ENCODE measurements at regions of chr1 and their contacts with region 1.

Region 1: GRCh38 chr1:205255941-205256780 is 28.4 kb downstream of the TMCC2 start:
- DNase-seq: peak; percentile 73 to 91 (median 83)
- ATAC-seq: peak; percentile 99
- H3K4me3 ChIP-seq: no peak overlapping the region
- H3K4me3 Mint-ChIP-seq: no peak overlapping the region
- H3K27ac ChIP-seq: no peak overlapping the region
- H3K27ac Mint-ChIP-seq: no peak overlapping the region
- H3K4me1 ChIP-seq: no peaks in the 10 kb centered on the region
- H3K4me1 Mint-ChIP-seq: no peaks in the 10 kb centered on the region
- H3K27me3 ChIP-seq: no peaks in the 10 kb centered on the region
- H3K27me3 Mint-ChIP-seq: no peaks in the 10 kb centered on the region
- CTCF ChIP-seq: peak; percentile 95

Region 2: GRCh38 chr1:204975570-204976235 is 280.5 kb before region 1 on chr1:
- CTCF ChIA-PET with region 1: interaction called, 66 read pairs
- POLR2A ChIA-PET with region 1: no interaction called
- intact Hi-C with region 1: loop called (anchors 1 kb)
- DNase-seq: peak; percentile 16 to 63 (median 49)
- ATAC-seq: peak; percentile 74
- H3K4me3 ChIP-seq: no peak overlapping the region
- H3K4me3 Mint-ChIP-seq: no peak overlapping the region
- H3K27ac ChIP-seq: no peak overlapping the region
- H3K27ac Mint-ChIP-seq: no peak overlapping the region
- H3K4me1 ChIP-seq: no peaks in the 10 kb centered on the region
- H3K4me1 Mint-ChIP-seq: no peaks in the 10 kb centered on the region
- H3K27me3 ChIP-seq: no peaks in the 10 kb centered on the region
- H3K27me3 Mint-ChIP-seq: peaks cover 16% of the 10 kb centered on the region
- CTCF ChIP-seq: peak; percentile 75

Region 3: GRCh38 chr1:205121660-205122488 is 134.3 kb before region 1 on chr1 and contains the start of gene RBBP5:
- CTCF ChIA-PET with region 1: interaction called, 15 read pairs
- POLR2A ChIA-PET with region 1: no interaction called
- intact Hi-C with region 1: loop called (anchors 1 to 2 kb)
- DNase-seq: peak; percentile 92 to 98 (median 95)
- ATAC-seq: peak; percentile 93
- H3K4me3 ChIP-seq: peak within 1 kb of the TSS; percentile 91 to 95
- H3K4me3 Mint-ChIP-seq: peak within 1 kb of the TSS; percentile 96
- H3K27ac ChIP-seq: peak within 1 kb of the TSS; percentile 88 to 97
- H3K27ac Mint-ChIP-seq: peak within 1 kb of the TSS; percentile 100
- H3K4me1 ChIP-seq: peaks cover 26% of the 10 kb centered on the region
- H3K4me1 Mint-ChIP-seq: peaks cover 46% of the 10 kb centered on the region
- H3K27me3 ChIP-seq: no peaks in the 10 kb centered on the region
- H3K27me3 Mint-ChIP-seq: no peaks in the 10 kb centered on the region
- CTCF ChIP-seq: peak; percentile 59
- total RNA-seq, gene RBBP5: 23.9 to 25.7 TPM

Region 4: DNA sequence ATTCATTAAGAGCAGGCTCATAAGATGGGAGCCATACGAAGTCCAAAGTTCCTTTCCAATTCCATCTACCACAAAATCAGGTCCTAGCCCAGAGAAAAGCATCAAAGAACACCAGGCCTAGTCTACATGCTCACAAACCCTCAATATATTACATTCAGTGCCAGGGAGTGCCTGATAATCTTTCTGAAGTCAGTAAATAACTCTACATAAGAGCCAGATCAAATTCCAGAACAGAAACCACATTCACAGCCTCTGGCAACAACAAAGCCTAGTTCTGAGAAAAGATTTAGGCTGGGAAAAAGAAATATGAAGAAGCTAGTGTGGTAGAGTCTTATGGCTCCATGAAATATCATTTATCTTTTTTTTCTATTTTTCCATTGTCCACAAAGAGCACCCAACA is 93.9 kb before region 1 on chr1:
- CTCF ChIA-PET with region 1: interaction called, 10 read pairs
- POLR2A ChIA-PET with region 1: no interaction called
- intact Hi-C with region 1: no loop called
- DNase-seq: no peak
- ATAC-seq: no peak
- H3K4me3 ChIP-seq: no peak overlapping the region
- H3K4me3 Mint-ChIP-seq: no peak overlapping the region
- H3K27ac ChIP-seq: no peak overlapping the region
- H3K27ac Mint-ChIP-seq: no peak overlapping the region
- H3K4me1 ChIP-seq: no peaks in the 10 kb centered on the region
- H3K4me1 Mint-ChIP-seq: peaks cover 2% of the 10 kb centered on the region
- H3K27me3 ChIP-seq: no peaks in the 10 kb centered on the region
- H3K27me3 Mint-ChIP-seq: no peaks in the 10 kb centered on the region
- CTCF ChIP-seq: no peak

Region 5: DNA sequence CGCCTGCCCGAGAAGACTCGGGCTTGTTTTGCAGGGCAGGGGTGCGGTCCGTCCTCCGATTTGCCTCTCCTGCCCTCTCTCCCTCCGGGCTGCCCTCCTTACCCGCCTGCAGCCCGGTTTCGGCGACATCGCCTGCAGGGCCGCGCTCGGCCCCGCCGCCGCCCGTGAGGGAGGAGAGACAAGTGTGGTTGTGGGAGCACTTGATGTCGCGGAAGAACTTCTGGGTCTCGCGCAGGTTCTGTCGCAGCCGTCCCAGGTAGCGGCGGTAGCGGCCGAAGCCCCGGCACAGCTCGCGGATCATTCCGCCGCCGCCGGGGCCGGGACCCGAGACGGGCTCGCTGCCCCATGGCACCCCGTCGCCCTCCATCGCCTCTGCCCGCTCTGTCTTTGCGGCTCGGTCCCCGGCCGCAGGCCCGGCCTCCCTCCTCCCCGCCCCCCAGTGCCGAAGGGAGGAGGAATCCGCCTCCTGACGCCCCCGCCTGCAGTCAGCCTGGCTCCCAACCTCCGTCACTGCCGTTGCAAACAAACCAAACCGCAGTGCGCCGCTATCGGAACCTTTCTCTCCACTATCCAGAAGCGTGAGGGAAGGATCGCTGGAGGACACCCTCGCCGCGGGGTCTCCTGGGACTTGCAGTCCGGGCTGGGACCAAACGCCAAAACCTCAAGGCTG is 44.9 kb before region 1 on chr1 and contains the start of gene DSTYK:
- CTCF ChIA-PET with region 1: interaction called, 4 read pairs
- POLR2A ChIA-PET with region 1: interaction called, 3 read pairs
- intact Hi-C with region 1: loop called in 1 of 2 experiments (anchors 5 kb)
- DNase-seq: peak; percentile 83 to 96 (median 91)
- ATAC-seq: peak; percentile 92
- H3K4me3 ChIP-seq: peak within 1 kb of the TSS; percentile 55 to 93
- H3K4me3 Mint-ChIP-seq: peak within 1 kb of the TSS; percentile 96
- H3K27ac ChIP-seq: peak within 1 kb of the TSS; percentile 58 to 80
- H3K27ac Mint-ChIP-seq: peak within 1 kb of the TSS; percentile 98
- H3K4me1 ChIP-seq: peaks cover 15% of the 10 kb centered on the region
- H3K4me1 Mint-ChIP-seq: peaks cover 50% of the 10 kb centered on the region
- H3K27me3 ChIP-seq: no peaks in the 10 kb centered on the region
- H3K27me3 Mint-ChIP-seq: no peaks in the 10 kb centered on the region
- CTCF ChIP-seq: no peak
- total RNA-seq, gene DSTYK: 15.4 to 17.2 TPM

Region 6: GRCh38 chr1:205267306-205267902 is 11.2 kb after region 1 on chr1:
- CTCF ChIA-PET with region 1: interaction called, 19 read pairs
- POLR2A ChIA-PET with region 1: no interaction called
- intact Hi-C with region 1: no loop called
- DNase-seq: no peak
- ATAC-seq: no peak
- H3K4me3 ChIP-seq: no peak overlapping the region
- H3K4me3 Mint-ChIP-seq: no peak overlapping the region
- H3K27ac ChIP-seq: no peak overlapping the region
- H3K27ac Mint-ChIP-seq: no peak overlapping the region
- H3K4me1 ChIP-seq: peaks cover 4% of the 10 kb centered on the region
- H3K4me1 Mint-ChIP-seq: peaks cover 7% of the 10 kb centered on the region
- H3K27me3 ChIP-seq: no peaks in the 10 kb centered on the region
- H3K27me3 Mint-ChIP-seq: no peaks in the 10 kb centered on the region
- CTCF ChIP-seq: no peak